Endothelial cell of umbilical vein (primary cell): ENCODE measurements at regions of chr3 and their contacts with region 1.

Region 1: DNA sequence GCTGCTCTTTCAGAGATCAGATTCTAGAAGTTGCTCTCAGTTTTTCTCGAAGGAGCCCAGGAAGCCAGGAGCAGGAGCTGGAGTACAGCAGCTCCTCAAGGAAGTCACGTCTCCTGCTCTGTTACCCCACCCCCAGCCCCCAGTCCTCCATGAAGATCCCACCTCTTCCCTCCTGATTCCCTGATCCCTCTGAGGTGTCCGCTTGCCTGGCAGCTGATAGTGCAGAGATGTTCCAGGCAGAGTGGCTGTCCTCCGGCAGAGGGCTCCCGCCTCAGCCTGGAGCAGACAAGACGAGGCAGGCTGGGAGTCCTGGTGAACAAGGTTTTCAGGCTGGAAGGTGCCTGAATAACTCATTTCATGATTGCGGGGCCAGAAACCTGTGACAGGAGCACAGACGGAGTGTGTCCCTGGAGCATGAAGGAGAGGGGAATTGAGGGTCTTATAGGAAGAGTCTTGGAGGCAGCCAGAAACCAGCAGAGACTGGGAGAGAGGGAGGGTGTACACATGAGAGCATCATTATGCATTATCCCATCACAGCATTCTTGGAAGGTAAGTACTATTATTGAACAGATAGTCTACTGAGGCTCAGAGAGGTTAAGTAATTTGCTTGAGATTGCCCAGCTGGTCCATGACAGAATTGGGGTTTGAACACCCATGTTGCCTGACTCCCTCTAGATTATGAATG is 1.2 kb downstream of the HRH1 start:
- DNase-seq: peak; percentile 84
- H3K4me3 ChIP-seq: peak overlapping the region; percentile 53 to 79 (median 78)
- H3K27ac ChIP-seq: peak overlapping the region; percentile 62
- H3K4me1 ChIP-seq: peaks cover 13% of the 10 kb centered on the region
- H3K27me3 ChIP-seq: no peaks in the 10 kb centered on the region
- CTCF ChIP-seq: peak; percentile 65 to 86
- POLR2A ChIP-seq: no peak

Region 2: DNA sequence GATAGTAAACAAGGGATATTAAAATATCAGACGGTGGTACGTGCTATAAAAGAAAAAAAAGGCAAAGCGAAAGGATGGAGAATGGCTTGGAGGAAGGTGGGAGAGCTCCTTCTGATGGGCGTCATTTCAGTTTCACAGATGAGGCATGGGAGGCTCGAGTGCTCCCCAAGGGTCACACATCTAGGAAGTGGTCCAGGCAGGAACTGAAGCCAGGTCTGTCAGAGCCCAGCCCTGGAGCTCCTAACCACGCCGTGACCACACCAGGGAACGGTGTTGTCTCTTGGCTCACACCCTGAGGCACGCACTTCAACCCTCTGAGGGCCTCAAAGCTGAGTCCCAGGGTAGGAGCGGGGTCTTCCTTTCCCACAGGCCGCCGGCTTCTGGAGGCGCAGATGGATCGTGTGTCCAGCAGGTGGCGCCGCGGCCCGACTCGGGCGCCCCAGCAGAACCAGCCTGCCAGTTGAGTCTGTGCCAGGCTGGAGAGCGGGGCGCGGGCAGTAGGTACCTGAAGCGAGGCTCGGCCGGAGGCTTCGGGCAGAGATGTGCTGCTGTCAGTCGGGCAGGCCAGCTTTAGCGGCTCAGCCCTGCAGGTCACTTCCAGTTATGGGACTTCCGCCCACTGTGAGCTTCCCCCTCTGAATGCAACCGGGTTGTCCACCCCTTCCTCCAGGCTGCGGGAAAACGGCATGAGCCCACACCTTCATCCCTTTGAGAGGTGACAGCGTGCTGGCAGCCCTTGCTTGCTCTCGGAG is 94.8 kb before region 1 on chr3:
- CTCF ChIA-PET with region 1: interaction called, 22 read pairs
- POLR2A ChIA-PET with region 1: no interaction called
- dilution Hi-C with region 1: no loop called
- intact Hi-C with region 1: loop called (anchors 1 kb)
- DNase-seq: peak; percentile 54
- H3K4me3 ChIP-seq: no peak overlapping the region
- H3K27ac ChIP-seq: no peak overlapping the region
- H3K4me1 ChIP-seq: no peaks in the 10 kb centered on the region
- H3K27me3 ChIP-seq: peaks cover 2 to 4% of the 10 kb centered on the region in 2 experiments
- CTCF ChIP-seq: peak; percentile 83 to 95
- POLR2A ChIP-seq: no peak

Region 3: DNA sequence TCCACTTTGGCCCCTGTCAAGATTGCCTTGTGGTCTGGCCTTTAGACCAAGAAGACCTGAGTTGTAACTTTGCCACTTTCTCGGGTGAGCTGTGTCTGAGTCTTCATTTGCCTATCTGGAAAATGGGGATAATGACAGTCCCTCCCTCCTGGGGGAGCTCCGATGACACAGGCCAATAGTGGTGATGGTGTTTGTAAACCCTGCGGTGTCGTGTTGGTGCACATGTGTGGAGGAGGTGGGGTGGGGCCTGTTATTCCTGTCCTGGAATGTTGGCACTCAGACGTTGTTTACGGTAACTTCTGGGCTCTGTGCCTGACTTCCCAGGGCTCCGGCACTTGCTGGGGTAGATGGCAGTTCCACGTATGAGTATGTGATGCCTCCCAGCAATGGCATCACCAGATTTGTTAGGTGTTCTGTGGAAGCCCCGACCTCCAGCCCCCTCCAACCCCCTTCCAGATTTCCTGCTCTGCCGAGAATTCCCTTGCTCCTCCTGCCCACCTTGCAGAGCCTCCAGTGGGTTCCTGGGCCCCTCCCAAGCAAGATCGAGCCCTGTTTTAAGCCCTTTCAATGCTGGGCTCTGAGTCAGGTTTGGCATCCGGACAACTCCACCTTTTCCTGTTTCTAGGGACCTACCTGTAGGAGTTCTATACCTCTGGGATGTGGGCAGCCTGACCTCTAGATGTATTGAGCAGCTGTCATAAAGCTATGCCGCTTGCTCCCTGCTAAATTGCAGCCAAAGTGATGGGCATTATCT is 30.3 kb after region 1 on chr3:
- CTCF ChIA-PET with region 1: interaction called, 4 read pairs
- POLR2A ChIA-PET with region 1: no interaction called
- dilution Hi-C with region 1: no loop called
- intact Hi-C with region 1: loop called (anchors 1 kb)
- DNase-seq: peak; percentile 97
- H3K4me3 ChIP-seq: no peak overlapping the region
- H3K27ac ChIP-seq: peak overlapping the region; percentile 64
- H3K4me1 ChIP-seq: peaks cover 45% of the 10 kb centered on the region
- H3K27me3 ChIP-seq: no peaks in the 10 kb centered on the region
- CTCF ChIP-seq: no peak
- POLR2A ChIP-seq: no peak

Region 4: GRCh38 chr3:11211531-11212298 is 56.2 kb after region 1 on chr3:
- CTCF ChIA-PET with region 1: interaction called, 68 read pairs
- POLR2A ChIA-PET with region 1: no interaction called
- dilution Hi-C with region 1: no loop called
- intact Hi-C with region 1: loop called (anchors 1 kb)
- DNase-seq: peak; percentile 35
- H3K4me3 ChIP-seq: no peak overlapping the region
- H3K27ac ChIP-seq: peak overlapping the region; percentile 83
- H3K4me1 ChIP-seq: peaks cover 48% of the 10 kb centered on the region
- H3K27me3 ChIP-seq: no peaks in the 10 kb centered on the region
- CTCF ChIP-seq: peak in 1 of 2 donors; percentile 14
- POLR2A ChIP-seq: no peak

Region 5: DNA sequence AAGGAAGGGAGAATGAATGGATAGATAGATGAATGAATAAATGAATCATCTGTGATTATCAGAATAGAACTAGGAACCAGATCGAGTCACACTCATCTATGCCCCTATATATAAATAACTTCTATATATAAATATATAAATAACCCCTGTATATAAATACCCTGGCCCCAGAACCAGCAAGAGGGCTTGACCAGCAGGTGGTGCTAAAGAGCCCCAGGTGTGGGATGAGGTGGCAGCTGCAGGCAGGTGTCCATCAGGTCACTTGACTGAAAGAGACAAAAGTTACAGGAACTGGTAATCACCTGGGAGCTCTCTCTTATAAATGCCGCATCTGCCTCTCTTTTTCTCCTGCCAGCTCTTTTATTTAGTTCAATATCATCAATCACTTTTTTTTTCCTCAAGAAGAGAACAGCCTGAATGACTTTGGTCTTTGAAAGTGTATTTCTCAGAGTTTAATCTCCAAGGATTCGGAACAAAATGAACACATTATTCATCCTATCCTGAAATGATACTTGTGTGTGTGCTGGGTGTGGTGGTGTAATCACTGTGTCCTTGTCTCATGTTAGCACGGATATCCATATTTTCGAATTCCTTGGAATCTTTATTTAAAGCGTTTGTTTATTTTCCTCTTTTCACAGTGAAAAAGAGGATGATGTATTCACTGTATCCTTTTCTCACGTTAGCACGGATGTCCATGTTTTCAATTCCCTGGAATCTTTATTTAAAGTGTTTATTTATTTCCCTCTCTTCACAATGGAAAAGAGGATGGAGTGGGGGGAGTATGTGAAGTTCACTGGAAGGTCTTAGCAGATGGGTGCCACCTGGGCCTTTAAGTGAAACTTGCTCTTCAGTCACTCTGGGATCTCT is 81.3 kb after region 1 on chr3:
- CTCF ChIA-PET with region 1: interaction called, 16 read pairs
- POLR2A ChIA-PET with region 1: no interaction called
- dilution Hi-C with region 1: no loop called
- intact Hi-C with region 1: no loop called
- DNase-seq: peak; percentile 61
- H3K4me3 ChIP-seq: no peak overlapping the region
- H3K27ac ChIP-seq: peak overlapping the region; percentile 40
- H3K4me1 ChIP-seq: peaks cover 23% of the 10 kb centered on the region
- H3K27me3 ChIP-seq: no peaks in the 10 kb centered on the region
- CTCF ChIP-seq: peak; percentile 75 to 78
- POLR2A ChIP-seq: no peak

Region 6: GRCh38 chr3:11465744-11466616 is 310.5 kb after region 1 on chr3:
- CTCF ChIA-PET with region 1: no interaction called
- POLR2A ChIA-PET with region 1: no interaction called
- dilution Hi-C with region 1: no loop called
- intact Hi-C with region 1: no loop called
- DNase-seq: no peak
- H3K4me3 ChIP-seq: no peak overlapping the region
- H3K27ac ChIP-seq: no peak overlapping the region
- H3K4me1 ChIP-seq: no peaks in the 10 kb centered on the region
- H3K27me3 ChIP-seq: no peaks in the 10 kb centered on the region
- CTCF ChIP-seq: no peak
- POLR2A ChIP-seq: no peak

Region 7: GRCh38 chr3:11651900-11652299 is 496.4 kb after region 1 on chr3:
- CTCF ChIA-PET with region 1: no interaction called
- POLR2A ChIA-PET with region 1: no interaction called
- dilution Hi-C with region 1: no loop called
- intact Hi-C with region 1: loop called (anchors 5 kb)
- DNase-seq: peak; percentile 62
- H3K4me3 ChIP-seq: no peak overlapping the region
- H3K27ac ChIP-seq: no peak overlapping the region
- H3K4me1 ChIP-seq: peaks cover 3% of the 10 kb centered on the region
- H3K27me3 ChIP-seq: no peaks in the 10 kb centered on the region
- CTCF ChIP-seq: peak in 1 of 2 donors; percentile 16
- POLR2A ChIP-seq: no peak